ENCODE measurements at regions of chr10 and their contacts with region 1.

Region 1: DNA sequence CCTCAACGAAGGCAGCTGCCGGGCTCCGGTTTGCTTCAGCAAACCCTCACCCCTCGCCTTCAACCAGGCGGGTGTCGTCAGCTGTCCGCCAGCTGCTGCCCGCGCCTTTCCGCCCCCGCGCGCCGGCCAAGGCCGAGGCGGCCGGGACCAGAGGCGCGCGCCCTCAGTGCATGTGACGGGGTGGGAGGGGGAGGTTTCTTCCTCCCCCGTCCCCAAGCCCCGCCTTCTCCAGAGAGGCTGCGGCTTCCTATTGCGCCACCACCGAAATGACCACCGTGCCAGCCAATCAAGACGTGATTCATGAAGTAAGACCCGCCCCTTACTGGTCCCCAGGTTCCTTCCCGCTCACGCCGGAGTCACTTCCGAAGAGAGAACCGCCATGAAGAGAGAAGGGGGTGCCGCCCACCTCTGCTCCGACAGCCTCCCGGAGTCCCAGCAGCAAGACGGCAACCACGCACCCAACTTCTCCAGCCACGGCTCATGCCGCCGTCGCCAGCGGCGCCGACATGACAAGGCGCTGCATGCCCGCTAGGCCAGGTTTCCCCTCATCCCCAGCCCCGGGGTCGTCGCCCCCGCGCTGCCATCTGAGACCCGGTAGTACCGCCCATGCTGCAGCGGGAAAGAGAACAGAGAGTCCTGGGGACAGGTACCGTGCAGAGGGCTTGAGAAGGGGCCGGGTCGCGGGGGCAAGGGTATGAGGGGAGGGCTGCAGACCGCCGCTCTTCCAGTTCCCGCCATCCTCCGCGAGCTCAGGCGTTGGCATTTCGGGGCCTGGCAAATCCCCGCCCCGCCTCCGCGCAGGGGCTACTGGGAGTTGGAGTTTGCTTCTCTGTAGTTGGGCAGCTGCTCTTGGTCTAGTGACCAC is at the start of gene SLF2:
- DNase-seq: peak; percentile 89 to 95
- ATAC-seq: peak; percentile 91 to 97 (median 92)
- H3K4me3 ChIP-seq: peak within 1 kb of the TSS; percentile 64
- H3K4me3 Mint-ChIP-seq: peak within 1 kb of the TSS; percentile 98
- H3K27ac ChIP-seq: peak within 1 kb of the TSS; percentile 75
- H3K27ac Mint-ChIP-seq: peak within 1 kb of the TSS; percentile 96
- H3K4me1 ChIP-seq: peaks cover 8% of the 10 kb centered on the region
- H3K4me1 Mint-ChIP-seq: peaks cover 28 to 43% of the 10 kb centered on the region in 2 donors
- H3K27me3 ChIP-seq: no peaks in the 10 kb centered on the region
- H3K27me3 Mint-ChIP-seq: no peaks in the 10 kb centered on the region
- CTCF ChIP-seq: no peak
- total RNA-seq, gene SLF2: 24.2 to 35.4 (median 30.9) TPM

Region 2: GRCh38 chr10:100433253-100434240 is 479.3 kb before region 1 on chr10:
- intact Hi-C with region 1: no loop called
- DNase-seq: peak; percentile 93 to 97
- ATAC-seq: peak; percentile 99 to 100 (median 100)
- H3K4me3 ChIP-seq: no peak overlapping the region
- H3K4me3 Mint-ChIP-seq: no peak overlapping the region
- H3K27ac ChIP-seq: no peak overlapping the region
- H3K27ac Mint-ChIP-seq: no peak overlapping the region
- H3K4me1 ChIP-seq: no peaks in the 10 kb centered on the region
- H3K4me1 Mint-ChIP-seq: no peaks in the 10 kb centered on the region
- H3K27me3 ChIP-seq: no peaks in the 10 kb centered on the region
- H3K27me3 Mint-ChIP-seq: no peaks in the 10 kb centered on the region
- CTCF ChIP-seq: peak; percentile 100

Region 3: DNA sequence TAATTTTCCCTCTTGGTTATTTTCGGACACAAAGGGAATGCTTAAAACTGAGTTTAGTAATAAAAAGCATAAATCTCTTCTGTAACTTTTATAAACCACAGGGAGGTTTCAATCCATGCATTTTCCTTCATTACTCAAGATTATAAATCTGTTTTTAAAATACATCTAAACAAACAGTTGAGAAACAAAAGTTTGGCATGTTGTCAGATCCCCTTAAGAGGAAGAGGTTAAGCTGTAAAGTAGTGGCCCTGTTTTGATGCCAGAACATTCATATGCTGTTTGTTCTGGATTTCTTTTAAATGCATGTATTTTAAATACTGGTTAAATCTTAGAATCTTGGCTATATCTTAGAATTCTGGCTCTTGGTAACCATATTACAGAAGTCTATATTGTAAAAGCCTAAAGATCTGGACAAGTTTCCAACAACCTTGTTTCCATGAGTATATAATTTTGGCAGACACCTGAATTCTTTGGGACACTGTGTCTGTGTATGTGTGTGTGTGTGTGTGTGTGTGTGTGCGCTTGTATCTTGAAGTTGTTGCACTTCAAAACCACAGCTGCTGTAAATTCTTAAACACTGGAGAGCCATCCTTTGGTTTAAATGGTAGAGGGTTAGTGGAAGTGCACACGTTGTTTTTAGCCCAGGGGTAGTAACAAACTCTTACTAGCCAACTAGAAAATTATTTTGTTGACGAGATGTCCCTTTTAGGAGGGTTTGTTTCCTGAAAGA is 49.7 kb after region 1 on chr10:
- intact Hi-C with region 1: no loop called
- DNase-seq: no peak
- ATAC-seq: no peak
- H3K4me3 ChIP-seq: no peak overlapping the region
- H3K4me3 Mint-ChIP-seq: no peak overlapping the region
- H3K27ac ChIP-seq: no peak overlapping the region
- H3K27ac Mint-ChIP-seq: no peak overlapping the region
- H3K4me1 ChIP-seq: no peaks in the 10 kb centered on the region
- H3K4me1 Mint-ChIP-seq: no peaks in the 10 kb centered on the region
- H3K27me3 ChIP-seq: no peaks in the 10 kb centered on the region
- H3K27me3 Mint-ChIP-seq: no peaks in the 10 kb centered on the region
- CTCF ChIP-seq: no peak

Region 4: DNA sequence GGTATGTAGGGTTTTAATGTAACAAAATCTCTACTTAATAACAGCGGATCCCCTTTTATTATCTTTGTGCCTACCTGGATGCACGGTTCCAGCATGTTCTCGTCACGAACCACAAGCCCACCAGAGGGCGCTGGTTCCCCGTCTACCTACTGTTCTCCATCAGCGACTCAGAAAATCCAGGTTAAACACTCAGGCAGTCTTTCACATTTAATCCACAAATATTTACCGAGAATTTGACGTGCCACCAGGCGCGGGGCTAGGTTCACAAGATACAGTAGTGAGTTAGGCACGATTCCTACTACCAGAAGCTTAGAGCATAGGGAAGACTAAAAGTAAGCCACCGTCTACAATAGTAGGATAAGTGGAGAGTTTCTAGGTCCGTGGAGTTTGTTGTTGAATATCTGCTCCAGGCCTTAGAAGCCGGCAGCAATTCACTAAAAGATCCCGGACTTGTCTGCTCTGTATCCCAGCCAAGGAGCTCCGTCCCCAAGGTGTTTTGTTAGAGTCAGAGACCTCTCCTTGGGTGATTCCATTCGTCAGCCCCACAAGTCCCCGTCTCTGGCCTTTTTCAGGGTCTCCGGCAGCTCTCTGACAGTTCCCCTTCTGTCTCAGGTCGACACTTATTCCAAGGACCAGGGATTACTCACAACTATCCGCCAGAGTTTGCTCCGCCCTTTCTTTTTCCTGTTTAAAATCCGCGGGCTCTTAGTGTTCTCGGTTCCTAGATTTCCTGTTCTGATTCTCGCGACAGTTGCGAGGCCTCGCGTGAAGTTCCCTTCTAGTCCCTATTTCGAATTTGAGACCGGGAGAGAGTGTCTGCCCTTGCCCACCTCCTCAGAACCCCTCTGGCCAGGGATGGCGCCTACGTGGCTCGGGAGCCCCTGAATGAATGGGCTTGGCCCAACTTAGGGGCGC is 147.5 kb after region 1 on chr10:
- intact Hi-C with region 1: loop called (anchors 2 kb)
- DNase-seq: peak; percentile 92 to 94
- ATAC-seq: peak; percentile 65 to 82 (median 71)
- H3K4me3 ChIP-seq: peak overlapping the region; percentile 82
- H3K4me3 Mint-ChIP-seq: peak overlapping the region; percentile 97
- H3K27ac ChIP-seq: peak overlapping the region; percentile 81
- H3K27ac Mint-ChIP-seq: peak overlapping the region; percentile 86 to 96
- H3K4me1 ChIP-seq: peaks cover 36% of the 10 kb centered on the region
- H3K4me1 Mint-ChIP-seq: peaks cover 25 to 37% of the 10 kb centered on the region in 2 donors
- H3K27me3 ChIP-seq: peaks cover 22% of the 10 kb centered on the region
- H3K27me3 Mint-ChIP-seq: peaks cover 16% of the 10 kb centered on the region in 2 donors
- CTCF ChIP-seq: peak; percentile 98